ENCODE measurements at regions of chr2 and their contacts with region 1.

Region 1: DNA sequence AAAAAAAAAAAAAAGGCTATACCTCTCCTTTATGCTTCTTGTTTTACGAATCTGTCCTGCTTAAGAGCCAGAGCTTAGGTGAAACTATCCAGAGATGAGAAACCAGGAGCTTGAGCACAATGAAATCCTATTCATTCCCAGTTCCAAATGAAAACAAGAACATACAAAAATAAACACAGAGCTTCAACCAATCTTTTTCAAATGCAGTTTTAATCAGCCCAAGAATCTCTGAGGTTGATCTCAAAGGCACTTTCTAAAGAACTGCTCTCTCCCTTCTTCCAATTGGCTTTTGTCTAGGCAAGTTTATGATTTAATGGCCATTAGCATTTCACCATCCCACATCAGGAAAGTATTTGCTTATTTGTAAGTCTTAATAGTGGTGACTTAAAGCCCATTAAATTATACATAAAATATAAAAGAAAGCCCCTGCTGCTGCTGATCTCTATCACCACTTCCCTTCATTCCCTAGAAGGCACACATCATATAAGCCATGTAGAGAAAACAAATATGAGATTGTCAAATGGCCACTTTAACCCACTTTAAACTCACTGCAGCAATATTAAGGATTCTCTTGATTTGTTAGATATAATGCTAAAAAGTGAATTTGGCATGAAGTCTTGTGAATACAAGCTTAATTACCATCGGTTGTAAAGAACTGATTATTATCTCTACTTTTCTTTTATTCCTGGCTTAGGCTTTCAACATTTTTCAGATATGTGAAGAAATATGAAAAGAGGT is 29.3 kb upstream of the SCN9A start:
- DNase-seq: no peak
- H3K4me3 ChIP-seq: no peak overlapping the region
- CTCF ChIP-seq: no peak

Region 2: GRCh38 chr2:166384774-166385173 is 20.2 kb before region 1 on chr2:
- CTCF ChIA-PET with region 1: interaction called, 15 read pairs
- POLR2A ChIA-PET with region 1: no interaction called
- DNase-seq: no peak
- H3K4me3 ChIP-seq: no peak overlapping the region
- CTCF ChIP-seq: no peak

Measured in AG04449 (cell line).